ENCODE measurements at regions of chr1 and their contacts with region 1.

Region 1: GRCh38 chr1:94962409-94963265 is 35.7 kb upstream of the CNN3 start:
- DNase-seq: no peak
- ATAC-seq: peak in 1 of 4 donors; percentile 52
- H3K4me3 ChIP-seq: peak overlapping the region; percentile 56
- H3K27ac ChIP-seq: peak overlapping the region; percentile 30
- H3K4me1 ChIP-seq: no peaks in the 10 kb centered on the region
- H3K27me3 ChIP-seq: no peaks in the 10 kb centered on the region
- CTCF ChIP-seq: no peak

Region 2: GRCh38 chr1:95035536-95035935 is 72.9 kb after region 1 on chr1:
- intact Hi-C with region 1: loop called in 1 of 2 experiments (anchors 10 kb)
- DNase-seq: no peak
- ATAC-seq: no peak
- H3K4me3 ChIP-seq: no peak overlapping the region
- H3K27ac ChIP-seq: no peak overlapping the region
- H3K4me1 ChIP-seq: no peaks in the 10 kb centered on the region
- H3K27me3 ChIP-seq: no peaks in the 10 kb centered on the region
- CTCF ChIP-seq: no peak

Measured in psoas muscle (tissue), 8 donors.